ENCODE measurements at regions of chr2 and their contacts with region 1.

Region 1: DNA sequence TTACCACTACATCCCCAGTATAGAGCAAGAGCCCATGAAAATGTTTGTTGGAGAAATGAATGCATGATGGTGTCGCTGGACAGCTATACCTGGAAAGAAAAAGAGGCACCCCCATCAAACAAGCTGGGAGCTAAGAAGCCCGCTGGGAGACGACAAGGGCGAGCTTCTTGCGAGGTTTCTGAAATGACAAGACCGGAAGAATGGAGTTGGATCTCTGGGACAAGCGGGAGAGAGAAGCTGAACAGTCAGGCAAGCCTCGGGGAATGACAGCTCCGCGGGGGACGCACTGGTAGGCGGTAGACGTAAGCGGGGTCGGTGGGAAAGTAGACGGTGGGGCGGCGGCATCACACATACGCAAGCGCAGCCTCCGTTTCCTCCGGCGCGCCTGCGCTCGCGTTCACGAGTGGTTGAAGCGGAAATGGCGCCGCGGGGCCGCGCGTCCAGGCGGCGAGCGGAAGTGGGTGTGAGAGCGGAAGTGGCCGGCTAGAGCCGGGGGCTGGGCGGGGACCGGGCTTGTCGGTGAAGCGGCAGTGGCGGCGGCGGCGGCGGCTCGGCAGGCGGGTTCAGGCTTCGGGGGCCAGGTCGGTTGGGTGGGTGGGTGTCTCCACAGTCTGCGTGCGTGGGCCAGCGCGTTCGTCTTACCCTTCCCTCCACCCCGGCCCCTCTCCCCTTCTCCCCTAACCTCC is at the start of gene ARPC2:
- DNase-seq: peak; percentile 90 to 98 (median 95)
- ATAC-seq: peak; percentile 78
- H3K4me3 ChIP-seq: peak within 1 kb of the TSS; percentile 91 to 97
- H3K4me3 Mint-ChIP-seq: peak within 1 kb of the TSS; percentile 91
- H3K27ac ChIP-seq: peak within 1 kb of the TSS; percentile 87 to 99
- H3K27ac Mint-ChIP-seq: peak within 1 kb of the TSS; percentile 97
- H3K4me1 ChIP-seq: peaks cover 36% of the 10 kb centered on the region
- H3K4me1 Mint-ChIP-seq: peaks cover 45% of the 10 kb centered on the region
- H3K27me3 ChIP-seq: no peaks in the 10 kb centered on the region
- H3K27me3 Mint-ChIP-seq: no peaks in the 10 kb centered on the region
- CTCF ChIP-seq: no peak
- total RNA-seq, gene ARPC2: 521 to 547 TPM

Region 2: DNA sequence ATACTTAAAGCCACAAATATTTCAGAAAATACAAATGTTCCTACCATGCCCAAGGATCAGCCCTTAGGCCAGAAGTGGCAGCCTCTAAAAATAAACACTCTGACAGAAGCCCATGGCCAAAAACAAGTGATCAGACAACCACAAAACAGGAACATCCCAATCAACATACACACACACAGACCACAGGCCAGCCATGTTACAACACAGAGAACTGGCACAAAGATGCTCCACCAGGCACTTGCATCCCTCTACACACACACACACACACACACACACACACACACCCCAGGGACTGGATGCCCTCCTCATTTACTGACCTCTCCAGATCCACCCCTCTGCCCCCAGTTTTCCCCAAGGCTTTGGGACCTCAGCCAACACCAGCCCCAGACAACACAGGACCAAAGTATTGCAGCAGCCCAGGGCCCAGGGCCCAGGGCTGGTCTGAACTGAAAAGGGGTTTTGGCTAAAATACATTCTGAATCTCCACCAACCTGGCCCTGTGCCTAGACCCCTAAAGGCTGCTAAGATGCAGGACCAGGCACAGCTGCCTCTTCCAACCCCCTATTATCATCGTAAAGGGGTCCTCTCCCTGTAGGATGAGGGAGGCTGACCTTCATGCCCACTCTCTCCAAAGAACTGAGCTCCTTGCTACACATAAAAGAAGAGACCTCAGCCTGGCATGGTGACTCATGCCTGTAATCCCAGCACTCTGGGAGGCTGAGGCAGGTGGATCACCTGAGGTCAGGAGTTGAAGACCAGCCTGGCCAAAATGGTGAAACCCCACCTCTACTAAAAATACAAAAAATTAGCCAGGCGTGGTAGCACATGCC is 365.4 kb before region 1 on chr2:
- CTCF ChIA-PET with region 1: no interaction called
- POLR2A ChIA-PET with region 1: no interaction called
- intact Hi-C with region 1: no loop called
- DNase-seq: no peak
- ATAC-seq: no peak
- H3K4me3 ChIP-seq: no peak overlapping the region
- H3K4me3 Mint-ChIP-seq: no peak overlapping the region
- H3K27ac ChIP-seq: no peak overlapping the region
- H3K27ac Mint-ChIP-seq: no peak overlapping the region
- H3K4me1 ChIP-seq: no peaks in the 10 kb centered on the region
- H3K4me1 Mint-ChIP-seq: no peaks in the 10 kb centered on the region
- H3K27me3 ChIP-seq: no peaks in the 10 kb centered on the region
- H3K27me3 Mint-ChIP-seq: peaks cover 6% of the 10 kb centered on the region
- CTCF ChIP-seq: no peak

Region 3: GRCh38 chr2:218186355-218186766 is 30.5 kb before region 1 on chr2:
- CTCF ChIA-PET with region 1: interaction called, 4 read pairs
- POLR2A ChIA-PET with region 1: no interaction called
- intact Hi-C with region 1: loop called in 1 of 2 experiments (anchors 1 kb)
- DNase-seq: peak; percentile 48 to 85 (median 71)
- ATAC-seq: peak; percentile 100
- H3K4me3 ChIP-seq: no peak overlapping the region
- H3K4me3 Mint-ChIP-seq: no peak overlapping the region
- H3K27ac ChIP-seq: no peak overlapping the region
- H3K27ac Mint-ChIP-seq: no peak overlapping the region
- H3K4me1 ChIP-seq: peaks cover 8% of the 10 kb centered on the region
- H3K4me1 Mint-ChIP-seq: peaks cover 8% of the 10 kb centered on the region
- H3K27me3 ChIP-seq: no peaks in the 10 kb centered on the region
- H3K27me3 Mint-ChIP-seq: no peaks in the 10 kb centered on the region
- CTCF ChIP-seq: peak; percentile 74

Region 4: GRCh38 chr2:218229239-218229638 is 12.4 kb after region 1 on chr2:
- CTCF ChIA-PET with region 1: interaction called, 9 read pairs
- POLR2A ChIA-PET with region 1: interaction called, 94 read pairs
- intact Hi-C with region 1: loop called (anchors 1 kb)
- DNase-seq: peak in 7 of 9 experiments; percentile 36 to 81 (median 49)
- ATAC-seq: peak; percentile 79
- H3K4me3 ChIP-seq: no peak overlapping the region
- H3K4me3 Mint-ChIP-seq: peak overlapping the region; percentile 44
- H3K27ac ChIP-seq: peak overlapping the region in 1 of 2 experiments; percentile 63
- H3K27ac Mint-ChIP-seq: peak overlapping the region; percentile 89
- H3K4me1 ChIP-seq: peaks cover 66% of the 10 kb centered on the region
- H3K4me1 Mint-ChIP-seq: peaks cover 78% of the 10 kb centered on the region
- H3K27me3 ChIP-seq: no peaks in the 10 kb centered on the region
- H3K27me3 Mint-ChIP-seq: no peaks in the 10 kb centered on the region
- CTCF ChIP-seq: no peak

Region 5: DNA sequence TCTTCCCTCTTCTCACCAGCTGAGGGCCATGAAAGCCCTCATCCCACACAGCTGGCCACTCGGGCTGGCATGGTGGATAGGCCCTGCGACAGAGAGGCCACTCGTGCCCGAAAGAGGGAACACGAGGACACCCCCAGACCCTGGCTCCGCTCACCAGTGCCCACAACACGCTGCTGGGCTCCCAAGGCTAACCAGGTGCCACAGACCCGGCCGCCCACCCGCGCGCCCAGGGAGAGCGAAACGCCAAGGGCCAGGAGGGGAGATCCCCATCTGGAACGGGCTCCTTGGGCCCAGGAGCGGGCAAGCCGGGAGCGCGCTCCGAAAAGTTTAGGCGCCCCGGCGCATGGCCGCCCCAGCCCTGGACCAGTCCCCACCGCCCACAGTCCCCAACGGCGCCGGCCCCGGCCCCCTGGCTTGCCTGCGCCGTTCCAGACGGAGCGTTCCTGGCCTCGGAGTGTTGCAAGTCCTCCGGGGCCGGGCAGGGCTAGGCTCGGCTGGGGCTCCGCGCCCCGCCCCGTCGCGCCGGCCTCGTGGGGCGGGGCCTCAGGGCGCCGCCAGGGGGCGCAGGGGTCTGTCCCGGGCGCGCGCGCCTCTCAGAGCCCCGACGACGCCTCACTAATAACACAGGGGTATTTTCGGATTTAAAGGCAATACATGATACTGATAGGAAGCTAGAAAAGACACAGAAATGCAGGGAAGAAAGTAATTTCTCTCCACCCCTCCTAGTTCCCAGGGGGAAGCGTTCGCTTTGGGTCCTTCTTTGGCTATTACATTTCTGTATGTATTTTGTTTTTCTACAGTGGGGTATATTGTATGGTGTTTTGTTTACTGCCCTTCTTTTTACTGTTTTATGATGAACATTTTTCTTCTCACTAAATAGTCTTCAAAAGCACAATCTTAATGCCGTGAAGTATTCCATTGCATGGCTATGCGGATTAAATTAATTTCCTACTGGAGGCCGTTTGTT is 75.5 kb after region 1 on chr2 and contains the start of gene TMBIM1:
- CTCF ChIA-PET with region 1: interaction called, 5 read pairs
- POLR2A ChIA-PET with region 1: interaction called, 3 read pairs
- intact Hi-C with region 1: loop called in 1 of 2 experiments (anchors 2 kb)
- DNase-seq: peak; percentile 64 to 91 (median 79)
- ATAC-seq: peak; percentile 82
- H3K4me3 ChIP-seq: peak within 1 kb of the TSS; percentile 79 to 89
- H3K4me3 Mint-ChIP-seq: peak within 1 kb of the TSS; percentile 83
- H3K27ac ChIP-seq: peak within 1 kb of the TSS; percentile 72 to 87
- H3K27ac Mint-ChIP-seq: peak within 1 kb of the TSS; percentile 98
- H3K4me1 ChIP-seq: peaks cover 50% of the 10 kb centered on the region
- H3K4me1 Mint-ChIP-seq: peaks cover 51% of the 10 kb centered on the region
- H3K27me3 ChIP-seq: no peaks in the 10 kb centered on the region
- H3K27me3 Mint-ChIP-seq: no peaks in the 10 kb centered on the region
- CTCF ChIP-seq: peak; percentile 93
- total RNA-seq, gene TMBIM1: 80.8 to 86.7 TPM

Region 6: GRCh38 chr2:218659258-218659987 is 442.6 kb after region 1 on chr2 and contains the starts of genes BCS1L and ZNF142:
- CTCF ChIA-PET with region 1: no interaction called
- POLR2A ChIA-PET with region 1: no interaction called
- intact Hi-C with region 1: loop called in 1 of 2 experiments (anchors 5 kb)
- DNase-seq: peak; percentile 78 to 97 (median 92)
- ATAC-seq: peak; percentile 98
- H3K4me3 ChIP-seq: peak within 1 kb of the TSS; percentile 95 to 98
- H3K4me3 Mint-ChIP-seq: peak within 1 kb of the TSS; percentile 97
- H3K27ac ChIP-seq: peak within 1 kb of the TSS; percentile 66 to 80
- H3K27ac Mint-ChIP-seq: peak within 1 kb of the TSS; percentile 95
- H3K4me1 ChIP-seq: peaks cover 17% of the 10 kb centered on the region
- H3K4me1 Mint-ChIP-seq: peaks cover 34% of the 10 kb centered on the region
- H3K27me3 ChIP-seq: no peaks in the 10 kb centered on the region
- H3K27me3 Mint-ChIP-seq: no peaks in the 10 kb centered on the region
- CTCF ChIP-seq: no peak
- total RNA-seq, gene BCS1L: 13.1 to 17.4 TPM
- total RNA-seq, gene ZNF142: 41.6 to 42.6 TPM

Region 7: GRCh38 chr2:218898109-218898878 is 681.5 kb after region 1 on chr2:
- CTCF ChIA-PET with region 1: no interaction called
- POLR2A ChIA-PET with region 1: no interaction called
- intact Hi-C with region 1: loop called in 1 of 2 experiments (anchors 5 kb)
- DNase-seq: peak; percentile 60 to 90 (median 81)
- ATAC-seq: peak; percentile 10
- H3K4me3 ChIP-seq: peak overlapping the region in 1 of 2 experiments; percentile 57
- H3K4me3 Mint-ChIP-seq: peak overlapping the region; percentile 80
- H3K27ac ChIP-seq: no peak overlapping the region
- H3K27ac Mint-ChIP-seq: no peak overlapping the region
- H3K4me1 ChIP-seq: peaks cover 54% of the 10 kb centered on the region
- H3K4me1 Mint-ChIP-seq: peaks cover 45% of the 10 kb centered on the region
- H3K27me3 ChIP-seq: peaks cover 7 to 33% of the 10 kb centered on the region in 2 experiments
- H3K27me3 Mint-ChIP-seq: peaks cover 30% of the 10 kb centered on the region
- CTCF ChIP-seq: peak; percentile 99